GM10248 (cell line): ENCODE measurements at regions of chr4 and their contacts with region 1.

Region 1: GRCh38 chr4:20684852-20685763 is 15.2 kb upstream of the PACRGL start:
- DNase-seq: peak; percentile 24
- CTCF ChIP-seq: peak; percentile 42

Region 2: DNA sequence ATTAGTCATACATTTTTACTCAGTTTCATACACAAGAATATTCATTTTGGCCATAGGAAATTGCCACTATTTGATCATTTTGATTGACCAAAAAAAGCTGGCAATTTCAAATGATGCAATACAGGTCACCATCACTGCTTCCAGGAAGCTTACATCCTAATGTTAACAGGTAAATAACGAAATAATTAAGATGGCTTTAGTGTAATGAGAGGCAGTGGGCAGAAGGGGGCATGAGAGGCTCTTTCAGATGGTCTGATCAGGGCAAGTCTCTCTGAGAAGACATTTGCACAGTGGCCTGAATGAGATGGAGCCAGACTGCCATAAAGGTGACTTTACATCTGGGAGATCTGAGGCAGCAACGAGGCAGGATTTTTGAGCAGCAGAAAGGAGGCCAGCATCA is 262.7 kb before region 1 on chr4:
- CTCF ChIA-PET with region 1: interaction called, 11 read pairs
- POLR2A ChIA-PET with region 1: no interaction called
- DNase-seq: peak; percentile 14
- CTCF ChIP-seq: peak; percentile 58

Region 3: DNA sequence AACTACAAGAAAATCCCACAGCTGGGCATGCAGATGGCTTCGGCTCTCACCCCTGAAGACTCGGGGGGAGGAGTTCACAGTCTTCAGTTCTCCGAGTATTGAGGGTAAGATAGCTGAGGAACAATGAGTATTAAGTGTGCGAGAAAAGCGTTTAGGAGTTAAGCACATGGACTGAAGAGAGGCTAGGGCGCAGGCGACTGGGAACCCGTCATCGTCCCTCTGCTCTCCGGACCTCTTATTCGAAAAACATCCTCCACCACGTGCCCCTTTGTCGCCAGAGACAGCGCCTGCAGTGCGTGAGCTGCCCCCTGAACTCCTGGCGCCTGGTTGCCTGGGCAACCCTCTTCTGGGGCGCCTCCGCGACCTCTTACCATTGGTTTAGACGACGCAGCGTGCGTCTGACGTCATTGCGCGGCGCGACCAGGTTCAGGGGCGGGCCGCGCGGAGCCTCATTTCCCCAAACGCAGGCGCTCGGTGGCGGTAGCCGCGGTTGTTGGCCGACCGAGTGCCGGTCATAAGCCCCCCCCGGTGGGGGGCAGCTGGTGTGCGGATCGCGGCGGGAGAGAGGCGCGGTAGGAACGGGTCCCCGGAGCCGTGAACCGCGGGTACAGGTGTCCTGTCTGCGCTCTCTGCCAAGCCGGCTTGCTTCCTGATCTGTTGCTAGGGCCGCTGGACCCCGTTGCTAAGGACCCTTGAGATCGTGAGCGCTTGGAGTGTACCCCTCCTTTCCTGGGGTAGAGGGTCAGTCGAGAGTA is 15.1 kb after region 1 on chr4 and contains the start of gene PACRGL:
- CTCF ChIA-PET with region 1: interaction called, 23 read pairs
- POLR2A ChIA-PET with region 1: no interaction called
- DNase-seq: peak; percentile 92
- CTCF ChIP-seq: no peak

Region 4: DNA sequence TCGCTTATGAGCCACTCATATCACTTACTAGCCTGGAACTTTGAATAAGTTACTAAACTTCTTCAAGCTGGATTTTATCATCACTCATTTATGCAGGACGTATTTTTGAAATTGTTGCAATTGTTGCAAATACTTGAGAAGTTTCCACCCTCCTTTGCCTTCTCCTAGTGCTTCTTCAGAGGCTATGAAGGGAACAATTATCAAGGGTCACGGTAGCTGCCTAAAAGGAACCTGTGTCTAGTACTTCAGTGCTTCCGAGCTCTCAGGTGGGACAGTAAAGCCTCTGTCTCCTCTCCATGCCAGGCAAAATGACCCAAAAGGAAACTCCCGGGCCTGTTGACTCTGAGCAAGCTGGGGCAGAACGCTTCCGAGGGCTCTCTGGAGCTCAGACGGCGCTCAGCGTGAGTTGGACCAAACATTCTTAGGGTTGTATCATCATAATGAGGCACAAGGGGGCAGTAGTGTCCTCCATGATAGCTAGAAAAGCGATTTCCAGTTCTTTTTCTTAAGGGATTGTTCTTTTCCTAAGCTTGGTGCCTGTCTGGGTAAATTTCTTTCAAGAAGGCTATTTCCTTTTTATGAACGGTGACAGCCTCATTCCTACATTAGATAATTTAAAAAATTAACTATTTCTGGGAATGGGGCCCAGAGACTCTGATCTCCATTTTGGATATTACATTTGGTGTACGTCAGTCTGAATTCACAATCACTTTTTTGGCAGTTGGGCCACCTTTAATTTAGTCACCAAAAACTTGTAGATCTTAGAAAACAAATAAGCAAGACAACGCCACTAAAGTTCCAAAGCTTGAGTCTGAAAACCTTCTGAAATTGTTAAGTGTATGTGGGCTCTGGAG is 88.3 kb after region 1 on chr4:
- CTCF ChIA-PET with region 1: no interaction called
- POLR2A ChIA-PET with region 1: no interaction called
- DNase-seq: peak; percentile 41
- CTCF ChIP-seq: peak; percentile 64